ENCODE measurements at regions of chr20 and their contacts with region 1.

Region 1: GRCh38 chr20:32945710-32946221 is 58.5 kb downstream of the SUN5 start:
- DNase-seq: peak in 3 of 5 donors; percentile 17 to 58 (median 52)
- H3K4me3 ChIP-seq: no peak overlapping the region
- H3K4me3 Mint-ChIP-seq: peak overlapping the region in 3 of 7 donors; percentile 29 to 49 (median 42)
- H3K27ac ChIP-seq: no peak overlapping the region
- H3K27ac Mint-ChIP-seq: peak overlapping the region in 7 of 8 donors; percentile 17 to 90 (median 68)
- H3K4me1 ChIP-seq: peaks cover 19% of the 10 kb centered on the region
- H3K4me1 Mint-ChIP-seq: peaks cover 16 to 39% (median 28%) of the 10 kb centered on the region in 3 donors
- H3K27me3 ChIP-seq: no peaks in the 10 kb centered on the region
- H3K27me3 Mint-ChIP-seq: peaks cover 0 to 6% of the 10 kb centered on the region in 2 donors

Region 2: DNA sequence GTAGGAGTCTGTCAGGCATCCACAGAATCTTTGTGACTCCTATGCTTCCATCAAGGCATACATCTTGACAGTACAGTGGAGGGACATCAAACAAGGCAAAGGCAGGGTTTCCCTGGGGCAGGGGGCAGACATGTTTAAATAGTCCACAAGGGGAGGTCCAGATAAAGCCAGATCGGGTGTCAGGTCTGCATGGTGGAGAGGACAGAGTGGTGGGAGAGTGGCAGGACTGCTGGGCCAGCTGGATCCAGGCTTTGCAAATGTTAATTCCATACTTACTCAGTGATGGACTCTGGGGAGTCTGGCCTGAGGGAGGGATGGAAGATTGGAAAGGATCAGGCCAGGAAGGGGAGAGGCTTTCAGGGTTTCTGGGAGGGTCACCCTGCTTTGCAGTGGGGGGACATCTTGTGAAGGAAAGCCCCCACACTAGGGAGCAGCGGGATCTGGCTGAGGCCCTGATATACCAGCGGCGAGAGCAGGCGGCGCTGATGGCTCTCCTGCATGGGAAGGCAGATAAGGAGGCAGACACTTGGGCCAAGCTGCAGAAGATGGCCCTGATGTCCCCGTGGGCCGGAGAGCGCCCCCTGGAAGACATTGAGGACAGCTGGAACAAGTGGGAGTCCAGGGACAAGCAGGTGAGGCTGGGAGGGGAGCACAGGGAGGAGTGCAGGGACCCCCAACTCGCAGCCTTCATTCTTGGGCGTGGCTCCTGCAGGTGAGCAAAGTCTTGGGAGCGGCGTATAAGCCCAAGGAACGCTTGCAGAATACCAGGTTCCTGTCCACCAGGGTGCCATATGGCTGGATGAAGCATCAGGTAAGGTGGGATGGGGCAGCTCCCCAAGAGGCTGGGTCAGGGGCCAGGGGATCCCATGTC is 13.8 kb after region 1 on chr20:
- CTCF ChIA-PET with region 1: interaction called, 10 read pairs
- POLR2A ChIA-PET with region 1: no interaction called
- DNase-seq: no peak
- H3K4me3 ChIP-seq: no peak overlapping the region
- H3K4me3 Mint-ChIP-seq: no peak overlapping the region
- H3K27ac ChIP-seq: no peak overlapping the region
- H3K27ac Mint-ChIP-seq: peak overlapping the region in 3 of 8 donors; percentile 5 to 56 (median 13)
- H3K4me1 ChIP-seq: peaks cover 11% of the 10 kb centered on the region
- H3K4me1 Mint-ChIP-seq: peaks cover 7 to 29% (median 13%) of the 10 kb centered on the region in 3 donors
- H3K27me3 ChIP-seq: no peaks in the 10 kb centered on the region
- H3K27me3 Mint-ChIP-seq: no peaks in the 10 kb centered on the region

Region 3: GRCh38 chr20:32966881-32967781 is 21.4 kb after region 1 on chr20:
- CTCF ChIA-PET with region 1: interaction called, 12 read pairs
- POLR2A ChIA-PET with region 1: interaction called, 6 read pairs
- DNase-seq: peak; percentile 41 to 81 (median 71)
- H3K4me3 ChIP-seq: peak overlapping the region; percentile 40
- H3K4me3 Mint-ChIP-seq: peak overlapping the region; percentile 66 to 93 (median 81)
- H3K27ac ChIP-seq: peak overlapping the region; percentile 38
- H3K27ac Mint-ChIP-seq: peak overlapping the region in 2 of 8 donors; percentile 96 to 100
- H3K4me1 ChIP-seq: peaks cover 84% of the 10 kb centered on the region
- H3K4me1 Mint-ChIP-seq: peaks cover 20 to 63% (median 60%) of the 10 kb centered on the region in 3 donors
- H3K27me3 ChIP-seq: no peaks in the 10 kb centered on the region
- H3K27me3 Mint-ChIP-seq: peaks cover 0 to 1% of the 10 kb centered on the region in 2 donors

Region 4: GRCh38 chr20:33005132-33005566 is 59.4 kb after region 1 on chr20:
- CTCF ChIA-PET with region 1: interaction called, 11 read pairs
- POLR2A ChIA-PET with region 1: no interaction called
- DNase-seq: peak in 2 of 5 donors; percentile 21 to 39
- H3K4me3 ChIP-seq: no peak overlapping the region
- H3K4me3 Mint-ChIP-seq: no peak overlapping the region
- H3K27ac ChIP-seq: no peak overlapping the region
- H3K27ac Mint-ChIP-seq: no peak overlapping the region
- H3K4me1 ChIP-seq: peaks cover 11% of the 10 kb centered on the region
- H3K4me1 Mint-ChIP-seq: peaks cover 3 to 14% (median 14%) of the 10 kb centered on the region in 3 donors
- H3K27me3 ChIP-seq: no peaks in the 10 kb centered on the region
- H3K27me3 Mint-ChIP-seq: no peaks in the 10 kb centered on the region

Region 5: GRCh38 chr20:33843854-33844253 is 898.1 kb after region 1 on chr20:
- CTCF ChIA-PET with region 1: no interaction called
- POLR2A ChIA-PET with region 1: no interaction called
- DNase-seq: peak in 1 of 5 donors; percentile 36
- H3K4me3 ChIP-seq: no peak overlapping the region
- H3K4me3 Mint-ChIP-seq: peak overlapping the region in 4 of 7 donors; percentile 5 to 14 (median 10)
- H3K27ac ChIP-seq: no peak overlapping the region
- H3K27ac Mint-ChIP-seq: peak overlapping the region; percentile 22 to 72 (median 44)
- H3K4me1 ChIP-seq: peaks cover 52% of the 10 kb centered on the region
- H3K4me1 Mint-ChIP-seq: peaks cover 75 to 96% (median 79%) of the 10 kb centered on the region in 3 donors
- H3K27me3 ChIP-seq: no peaks in the 10 kb centered on the region
- H3K27me3 Mint-ChIP-seq: no peaks in the 10 kb centered on the region

Measured in CD8-positive, alpha-beta memory T cell (primary cell).